ENCODE measurements at regions of chr1 and their contacts with region 1.

Region 1: DNA sequence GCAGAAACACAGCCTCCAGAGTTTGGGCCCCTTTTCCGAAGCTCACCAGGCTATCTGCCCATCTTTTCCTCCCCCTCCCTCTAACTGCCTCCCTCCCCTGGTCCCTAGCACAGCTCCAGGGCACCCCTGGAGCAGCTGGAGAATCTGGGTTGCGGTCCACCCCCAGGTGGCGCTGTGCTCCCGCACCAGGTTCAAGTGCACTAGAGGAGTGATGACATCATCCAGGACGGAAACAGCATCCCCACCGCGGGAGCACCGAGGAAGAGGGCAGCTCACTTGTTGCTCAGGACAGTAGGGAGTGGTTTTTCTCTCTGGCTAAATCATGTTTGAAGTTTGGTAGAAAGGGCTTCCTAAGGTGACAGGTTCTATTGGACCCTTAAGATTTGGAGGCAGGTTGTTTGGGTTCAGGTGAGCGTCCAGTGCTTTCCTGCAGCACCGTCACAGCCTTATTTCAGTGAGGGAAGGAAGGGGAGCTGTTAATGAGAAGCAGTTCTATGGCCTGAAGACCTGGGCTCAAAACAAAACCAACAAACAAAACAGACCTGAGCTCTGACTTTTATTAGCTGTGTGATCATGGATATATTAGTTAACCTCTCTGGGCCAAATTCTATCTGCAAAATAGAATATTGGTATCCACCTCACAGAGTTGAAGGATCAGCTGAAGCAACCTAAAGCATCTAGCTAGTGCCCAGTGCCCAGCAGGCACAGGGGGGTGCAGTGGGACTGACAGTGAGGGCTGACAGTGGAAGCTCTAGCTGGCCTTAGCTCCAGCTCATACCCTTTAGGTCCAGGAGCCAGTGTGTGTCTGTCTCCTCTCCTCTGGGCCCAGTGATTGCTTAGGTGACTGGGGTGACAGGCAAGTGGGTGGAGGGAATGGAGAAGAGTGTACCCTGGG is 7.5 kb downstream of the SHISA4 start:
- DNase-seq: peak; percentile 90
- CTCF ChIP-seq: peak; percentile 93

Region 2: GRCh38 chr1:201877877-201878401 is 18.2 kb before region 1 on chr1:
- CTCF ChIA-PET with region 1: interaction called, 174 read pairs
- POLR2A ChIA-PET with region 1: no interaction called
- DNase-seq: peak; percentile 53
- CTCF ChIP-seq: peak; percentile 42

Region 3: GRCh38 chr1:201946224-201946908 is 50.2 kb after region 1 on chr1 and contains the start of gene LMOD1:
- CTCF ChIA-PET with region 1: interaction called, 17 read pairs
- POLR2A ChIA-PET with region 1: no interaction called
- DNase-seq: no peak
- CTCF ChIP-seq: no peak

Region 4: DNA sequence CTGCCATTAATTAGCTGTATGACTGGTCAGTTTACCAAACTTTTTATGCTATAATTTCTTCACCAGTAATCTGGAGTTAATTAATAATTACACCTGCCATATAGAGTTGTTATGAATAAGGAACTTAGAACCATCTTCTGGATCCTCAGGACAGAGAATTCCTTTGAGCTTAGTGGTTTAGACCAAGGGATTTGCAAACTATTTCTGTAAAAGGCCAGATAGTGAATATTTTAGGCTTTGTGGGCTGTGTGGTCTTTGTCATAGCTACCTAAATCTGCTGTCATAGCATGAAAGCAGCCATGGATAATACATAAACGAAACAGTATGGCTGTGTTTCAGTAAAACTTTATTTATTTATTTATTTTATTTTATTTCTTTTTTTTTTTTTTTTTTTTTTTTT is 68.1 kb after region 1 on chr1:
- CTCF ChIA-PET with region 1: interaction called, 47 read pairs
- POLR2A ChIA-PET with region 1: interaction called, 5 read pairs
- DNase-seq: no peak
- CTCF ChIP-seq: no peak

Region 5: DNA sequence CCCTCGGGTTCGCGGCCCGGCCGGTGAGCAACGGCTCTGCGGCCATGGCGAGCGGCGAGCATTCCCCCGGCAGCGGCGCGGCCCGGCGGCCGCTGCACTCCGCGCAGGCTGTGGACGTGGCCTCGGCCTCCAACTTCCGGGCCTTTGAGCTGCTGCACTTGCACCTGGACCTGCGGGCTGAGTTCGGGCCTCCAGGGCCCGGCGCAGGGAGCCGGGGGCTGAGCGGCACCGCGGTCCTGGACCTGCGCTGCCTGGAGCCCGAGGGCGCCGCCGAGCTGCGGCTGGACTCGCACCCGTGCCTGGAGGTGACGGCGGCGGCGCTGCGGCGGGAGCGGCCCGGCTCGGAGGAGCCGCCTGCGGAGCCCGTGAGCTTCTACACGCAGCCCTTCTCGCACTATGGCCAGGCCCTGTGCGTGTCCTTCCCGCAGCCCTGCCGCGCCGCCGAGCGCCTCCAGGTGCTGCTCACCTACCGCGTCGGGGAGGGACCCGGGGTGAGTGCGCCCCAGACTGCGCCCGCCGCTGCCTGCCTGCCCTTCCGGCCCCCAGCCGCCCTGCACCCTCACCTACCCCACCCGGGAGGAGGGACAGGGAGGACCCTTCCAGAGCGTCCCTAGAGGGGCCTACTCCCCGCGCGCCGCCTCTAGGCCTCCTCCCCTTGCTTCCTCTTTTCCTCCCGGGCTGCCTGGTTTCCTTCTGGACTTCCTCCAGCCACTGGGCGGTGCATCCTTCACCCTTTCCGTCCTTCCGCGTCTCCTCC is 86.6 kb after region 1 on chr1 and contains the start of gene RNPEP:
- CTCF ChIA-PET with region 1: interaction called, 21 read pairs
- POLR2A ChIA-PET with region 1: no interaction called
- DNase-seq: peak; percentile 65
- CTCF ChIP-seq: no peak

Region 6: GRCh38 chr1:202122639-202123335 is 226.6 kb after region 1 on chr1 and contains the start of gene GPR37L1:
- CTCF ChIA-PET with region 1: interaction called, 28 read pairs
- POLR2A ChIA-PET with region 1: no interaction called
- DNase-seq: no peak
- CTCF ChIP-seq: no peak